CD14-positive monocyte (primary cell): ENCODE measurements at regions of chrX and their contacts with region 1.

Region 1: GRCh38 chrX:54639346-54640102 is 109.5 kb downstream of the GNL3L start:
- DNase-seq: peak; percentile 84 to 93 (median 91)
- H3K4me3 ChIP-seq: peak overlapping the region; percentile 51 to 77 (median 67)
- H3K4me3 Mint-ChIP-seq: peak overlapping the region; percentile 86 to 92
- H3K27ac ChIP-seq: peak overlapping the region; percentile 85 to 98
- H3K27ac Mint-ChIP-seq: peak overlapping the region; percentile 97 to 99 (median 98)
- H3K4me1 ChIP-seq: peaks cover 9 to 12% of the 10 kb centered on the region in 2 donors
- H3K4me1 Mint-ChIP-seq: peaks cover 4% of the 10 kb centered on the region
- H3K27me3 ChIP-seq: no peaks in the 10 kb centered on the region
- H3K27me3 Mint-ChIP-seq: peaks cover 0 to 4% (median 1%) of the 10 kb centered on the region in 3 donors
- CTCF ChIP-seq: peak; percentile 67

Region 2: GRCh38 chrX:54529552-54530357 is 109.8 kb before region 1 on chrX and contains the start of gene GNL3L:
- intact Hi-C with region 1: loop called in 1 of 2 experiments (anchors 10 kb)
- DNase-seq: peak; percentile 75 to 88 (median 81)
- H3K4me3 ChIP-seq: peak within 1 kb of the TSS; percentile 92 to 97 (median 94)
- H3K4me3 Mint-ChIP-seq: peak within 1 kb of the TSS; percentile 87 to 93
- H3K27ac ChIP-seq: peak within 1 kb of the TSS; percentile 81 to 92
- H3K27ac Mint-ChIP-seq: peak within 1 kb of the TSS; percentile 86 to 99 (median 96)
- H3K4me1 ChIP-seq: peaks cover 17 to 24% of the 10 kb centered on the region in 2 donors
- H3K4me1 Mint-ChIP-seq: peaks cover 32% of the 10 kb centered on the region
- H3K27me3 ChIP-seq: no peaks in the 10 kb centered on the region
- H3K27me3 Mint-ChIP-seq: peaks cover 0 to 4% (median 0%) of the 10 kb centered on the region in 3 donors
- CTCF ChIP-seq: no peak
- polyA plus RNA-seq, gene GNL3L: 11.8 to 20.7 (median 18.1) TPM

Region 3: DNA sequence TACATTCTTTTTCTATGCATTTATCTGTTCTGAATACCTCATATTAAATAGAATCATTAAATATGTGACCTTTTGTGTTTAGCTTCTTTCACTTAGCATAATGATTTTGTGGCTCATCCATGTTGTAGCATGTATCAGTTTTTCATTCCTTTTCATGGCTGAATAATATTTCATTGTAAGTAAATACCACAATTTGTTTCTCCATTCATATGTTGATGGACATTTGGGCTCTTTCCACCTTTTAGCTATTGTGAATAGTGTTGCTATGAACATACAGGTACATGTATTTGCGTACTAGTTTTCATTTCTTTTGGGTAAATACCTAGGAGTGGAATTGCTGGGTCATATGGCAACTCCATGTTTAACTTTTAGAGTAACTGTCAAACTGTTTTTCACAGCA is 24.4 kb before region 1 on chrX:
- intact Hi-C with region 1: no loop called
- DNase-seq: no peak
- H3K4me3 ChIP-seq: no peak overlapping the region
- H3K4me3 Mint-ChIP-seq: no peak overlapping the region
- H3K27ac ChIP-seq: no peak overlapping the region
- H3K27ac Mint-ChIP-seq: no peak overlapping the region
- H3K4me1 ChIP-seq: no peaks in the 10 kb centered on the region
- H3K4me1 Mint-ChIP-seq: no peaks in the 10 kb centered on the region
- H3K27me3 ChIP-seq: no peaks in the 10 kb centered on the region
- H3K27me3 Mint-ChIP-seq: peaks cover 0 to 6% (median 0%) of the 10 kb centered on the region in 3 donors
- CTCF ChIP-seq: no peak

Region 4: DNA sequence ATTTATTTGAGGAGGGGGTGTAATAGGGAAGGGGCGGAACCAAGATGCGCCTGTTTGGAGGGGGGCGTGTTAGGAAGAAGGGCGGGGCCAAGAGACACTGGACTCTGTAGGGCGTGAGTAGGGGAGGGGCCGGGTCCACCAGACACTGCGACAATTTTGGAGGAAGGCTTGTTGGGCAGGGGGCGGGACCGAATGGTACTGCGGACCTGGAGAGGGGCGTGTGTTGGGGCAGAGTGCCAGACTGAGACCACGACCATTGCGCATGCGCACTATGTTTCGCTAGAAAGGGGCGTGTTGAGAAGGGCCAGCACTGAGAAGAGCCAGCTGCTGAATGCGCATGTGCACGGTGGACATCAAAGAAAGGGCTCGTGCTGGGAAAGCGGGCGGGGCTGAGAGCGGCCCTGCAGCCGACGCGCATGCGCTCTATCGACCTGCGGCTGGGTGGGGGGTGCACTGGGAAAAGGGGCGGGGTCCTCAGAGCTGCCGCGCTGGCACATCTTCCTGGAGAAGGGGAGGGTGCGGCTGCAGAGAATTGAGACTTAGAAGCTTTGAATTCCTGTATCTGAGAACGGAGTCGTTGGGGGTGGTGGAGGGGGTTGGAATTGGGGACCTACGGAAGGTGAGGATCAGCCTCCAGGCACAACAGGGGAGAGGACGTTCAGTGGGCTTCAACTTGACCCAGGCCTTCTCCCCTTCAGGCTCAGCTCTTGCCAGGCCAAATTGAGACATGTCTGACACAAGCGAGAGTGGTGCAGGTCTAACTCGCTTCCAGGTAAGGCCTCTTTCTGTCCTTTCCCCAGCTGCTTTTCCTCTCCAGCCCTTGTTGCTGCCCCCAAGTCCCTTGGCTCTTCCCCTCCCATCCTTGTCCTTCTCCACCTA is 169.3 kb after region 1 on chrX:
- intact Hi-C with region 1: loop called (anchors 10 kb)
- DNase-seq: peak; percentile 92 to 94 (median 92)
- H3K4me3 ChIP-seq: peak overlapping the region; percentile 62 to 82 (median 72)
- H3K4me3 Mint-ChIP-seq: peak overlapping the region; percentile 88 to 94
- H3K27ac ChIP-seq: peak overlapping the region; percentile 47 to 64
- H3K27ac Mint-ChIP-seq: peak overlapping the region; percentile 77 to 92 (median 89)
- H3K4me1 ChIP-seq: peaks cover 15 to 19% of the 10 kb centered on the region in 2 donors
- H3K4me1 Mint-ChIP-seq: peaks cover 20% of the 10 kb centered on the region
- H3K27me3 ChIP-seq: no peaks in the 10 kb centered on the region
- H3K27me3 Mint-ChIP-seq: peaks cover 2 to 10% (median 6%) of the 10 kb centered on the region in 3 donors
- CTCF ChIP-seq: no peak

Region 5: DNA sequence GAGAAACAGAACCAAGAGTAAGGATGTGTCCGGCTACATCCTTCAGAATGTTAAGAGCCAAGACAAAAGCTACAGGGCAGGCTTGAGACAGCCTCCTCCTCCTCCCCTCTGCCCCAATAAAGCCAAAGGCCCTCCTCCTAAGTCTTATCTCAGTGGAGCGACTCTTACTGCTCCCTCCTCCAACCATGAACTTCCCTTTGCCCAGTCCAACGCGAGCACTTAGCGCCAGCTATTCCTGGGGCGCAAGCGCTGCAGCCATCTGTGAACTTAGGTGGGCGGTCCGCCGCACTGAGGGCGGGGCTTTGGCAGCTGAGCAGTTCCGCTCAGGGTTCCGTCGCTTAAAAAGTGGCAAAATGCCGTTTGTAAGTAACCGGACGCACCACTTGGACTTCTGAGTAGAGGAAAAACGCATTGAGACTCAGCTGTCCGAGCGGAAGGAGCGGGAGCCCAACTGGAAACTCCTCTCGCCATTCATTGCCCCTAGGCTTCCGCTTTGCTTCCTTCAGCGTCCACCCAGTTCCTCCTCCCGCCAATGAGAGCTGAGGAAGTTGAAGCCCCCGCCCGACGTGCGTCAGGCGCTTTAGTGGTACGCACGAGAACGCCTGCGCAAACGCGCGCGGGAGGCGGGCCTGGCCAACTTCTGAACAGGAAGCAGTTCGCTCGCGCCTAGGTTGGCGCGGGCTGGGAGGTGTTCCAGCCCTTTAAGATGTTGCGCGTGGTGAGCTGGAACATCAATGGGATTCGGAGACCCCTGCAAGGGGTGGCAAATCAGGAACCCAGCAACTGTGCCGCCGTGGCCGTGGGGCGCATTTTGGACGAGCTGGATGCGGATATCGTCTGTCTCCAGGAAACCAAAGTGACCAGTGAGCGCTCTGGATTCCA is 360.4 kb after region 1 on chrX and contains the start of gene APEX2:
- intact Hi-C with region 1: loop called in 1 of 2 experiments (anchors 10 kb)
- DNase-seq: peak; percentile 89 to 91 (median 90)
- H3K4me3 ChIP-seq: peak within 1 kb of the TSS; percentile 72 to 84 (median 80)
- H3K4me3 Mint-ChIP-seq: peak within 1 kb of the TSS; percentile 84 to 95
- H3K27ac ChIP-seq: peak within 1 kb of the TSS; percentile 89 to 96
- H3K27ac Mint-ChIP-seq: peak within 1 kb of the TSS; percentile 90 to 98 (median 95)
- H3K4me1 ChIP-seq: peaks cover 14 to 17% of the 10 kb centered on the region in 2 donors
- H3K4me1 Mint-ChIP-seq: peaks cover 18% of the 10 kb centered on the region
- H3K27me3 ChIP-seq: peaks cover 0 to 2% of the 10 kb centered on the region in 2 donors
- H3K27me3 Mint-ChIP-seq: peaks cover 0 to 7% (median 5%) of the 10 kb centered on the region in 3 donors
- CTCF ChIP-seq: no peak
- polyA plus RNA-seq, gene APEX2: 13.3 to 17.8 (median 14.4) TPM

Region 6: DNA sequence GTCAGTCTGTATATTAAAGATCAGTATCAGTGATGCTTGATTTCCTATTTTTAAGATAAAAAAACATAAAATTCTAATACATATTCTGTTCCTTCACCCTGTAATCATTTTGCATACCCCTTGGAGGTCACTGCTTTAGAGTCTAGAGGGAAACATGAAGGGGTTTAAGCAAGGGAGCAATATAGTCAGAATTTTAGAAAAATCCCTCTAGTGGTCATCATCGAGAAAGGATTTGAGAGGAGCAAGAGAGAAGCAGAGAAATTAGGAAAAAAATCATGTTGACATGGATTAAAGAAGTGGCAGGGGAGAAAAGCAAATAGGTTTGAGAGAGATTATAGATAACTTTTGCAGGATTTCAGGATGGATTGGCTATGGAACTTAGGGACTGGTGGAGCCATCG is 371.8 kb after region 1 on chrX:
- intact Hi-C with region 1: loop called (anchors 10 kb)
- DNase-seq: no peak
- H3K4me3 ChIP-seq: no peak overlapping the region
- H3K4me3 Mint-ChIP-seq: no peak overlapping the region
- H3K27ac ChIP-seq: no peak overlapping the region
- H3K27ac Mint-ChIP-seq: no peak overlapping the region
- H3K4me1 ChIP-seq: peaks cover 14 to 17% of the 10 kb centered on the region in 2 donors
- H3K4me1 Mint-ChIP-seq: peaks cover 13% of the 10 kb centered on the region
- H3K27me3 ChIP-seq: no peaks in the 10 kb centered on the region
- H3K27me3 Mint-ChIP-seq: peaks cover 0 to 4% (median 0%) of the 10 kb centered on the region in 3 donors
- CTCF ChIP-seq: no peak

Region 7: GRCh38 chrX:55160685-55161552 is 521.4 kb after region 1 on chrX:
- intact Hi-C with region 1: loop called in 1 of 2 experiments (anchors 10 kb)
- DNase-seq: peak; percentile 73 to 78 (median 78)
- H3K4me3 ChIP-seq: peak overlapping the region; percentile 34 to 76 (median 60)
- H3K4me3 Mint-ChIP-seq: peak overlapping the region; percentile 86 to 93
- H3K27ac ChIP-seq: peak overlapping the region; percentile 80 to 81
- H3K27ac Mint-ChIP-seq: peak overlapping the region; percentile 91 to 98 (median 95)
- H3K4me1 ChIP-seq: peaks cover 12 to 14% of the 10 kb centered on the region in 2 donors
- H3K4me1 Mint-ChIP-seq: peaks cover 12% of the 10 kb centered on the region
- H3K27me3 ChIP-seq: no peaks in the 10 kb centered on the region
- H3K27me3 Mint-ChIP-seq: peaks cover 6 to 12% (median 7%) of the 10 kb centered on the region in 3 donors
- CTCF ChIP-seq: peak; percentile 65

Region 8: GRCh38 chrX:55717521-55718497 is 1078.3 kb after region 1 on chrX and contains the start of gene RRAGB:
- intact Hi-C with region 1: loop called in 1 of 2 experiments (anchors 10 kb)
- DNase-seq: peak; percentile 87 to 90 (median 87)
- H3K4me3 ChIP-seq: peak within 1 kb of the TSS; percentile 61 to 80 (median 78)
- H3K4me3 Mint-ChIP-seq: peak within 1 kb of the TSS; percentile 84 to 93
- H3K27ac ChIP-seq: peak within 1 kb of the TSS; percentile 85 to 98
- H3K27ac Mint-ChIP-seq: peak within 1 kb of the TSS; percentile 90 to 96 (median 94)
- H3K4me1 ChIP-seq: peaks cover 32 to 47% of the 10 kb centered on the region in 2 donors
- H3K4me1 Mint-ChIP-seq: peaks cover 43% of the 10 kb centered on the region
- H3K27me3 ChIP-seq: no peaks in the 10 kb centered on the region
- H3K27me3 Mint-ChIP-seq: peaks cover 0 to 2% (median 0%) of the 10 kb centered on the region in 3 donors
- CTCF ChIP-seq: peak; percentile 47
- polyA plus RNA-seq, gene RRAGB: 8.7 to 27.8 (median 16.3) TPM